Lower lobe of right lung (tissue), 2 donors: ENCODE measurements at regions of chr5 and their contacts with region 1.

Region 1: GRCh38 chr5:142769741-142770631 is at the start of gene ARHGAP26:
- DNase-seq: peak; percentile 98
- ATAC-seq: peak; percentile 98 to 99
- H3K4me3 ChIP-seq: peak within 1 kb of the TSS; percentile 89
- H3K27ac ChIP-seq: peak within 1 kb of the TSS; percentile 85
- H3K4me1 ChIP-seq: peaks cover 33% of the 10 kb centered on the region
- H3K27me3 ChIP-seq: no peaks in the 10 kb centered on the region
- CTCF ChIP-seq: peak; percentile 37
- total RNA-seq, gene ARHGAP26: 42.1 TPM

Region 2: DNA sequence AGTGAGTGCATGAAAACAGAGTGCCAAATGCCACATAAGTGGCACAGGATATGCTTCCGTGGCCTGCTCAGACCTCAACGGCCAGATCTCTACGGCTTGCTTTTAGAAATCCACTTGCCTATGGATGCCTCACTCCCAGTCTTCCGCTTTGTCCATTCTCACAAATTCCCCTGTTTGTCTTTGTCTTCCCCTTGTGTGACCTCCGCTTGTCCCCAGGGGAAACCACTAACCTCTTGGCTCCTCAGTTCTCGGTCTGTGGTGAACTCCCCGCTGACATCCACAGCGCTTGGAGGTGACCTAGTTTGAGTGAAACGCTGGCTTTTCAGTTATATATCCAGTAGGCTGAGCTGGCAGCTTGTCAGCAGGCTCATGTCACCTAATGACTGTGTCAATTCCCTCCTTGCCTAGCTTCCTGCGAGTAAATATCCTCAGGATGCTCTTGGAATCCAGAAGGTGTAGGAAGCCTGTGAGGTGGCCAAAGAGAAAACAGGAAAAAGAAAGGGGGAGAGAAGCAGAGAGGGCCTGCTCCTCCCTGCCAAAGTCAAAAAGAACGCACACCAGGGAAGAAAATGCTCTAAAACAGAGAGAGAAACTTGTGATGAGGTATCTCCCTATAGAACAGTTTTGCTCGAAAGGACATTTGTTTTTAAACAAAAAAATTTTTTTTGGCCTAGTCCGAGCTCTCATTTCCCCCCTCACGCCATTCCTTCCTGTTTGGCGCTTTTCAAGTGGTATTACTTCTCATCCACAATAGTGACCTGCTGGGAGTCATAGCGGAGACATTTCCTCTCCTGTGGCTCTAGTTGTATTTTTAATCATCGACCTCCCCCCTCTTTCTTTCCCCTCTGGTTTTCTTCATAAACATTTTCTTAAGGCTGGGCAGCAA is 343.6 kb before region 1 on chr5:
- intact Hi-C with region 1: no loop called
- DNase-seq: no peak
- ATAC-seq: peak in 1 of 2 donors; percentile 61
- H3K4me3 ChIP-seq: no peak overlapping the region
- H3K27ac ChIP-seq: peak overlapping the region; percentile 21
- H3K4me1 ChIP-seq: peaks cover 23% of the 10 kb centered on the region
- H3K27me3 ChIP-seq: no peaks in the 10 kb centered on the region
- CTCF ChIP-seq: no peak

Region 3: DNA sequence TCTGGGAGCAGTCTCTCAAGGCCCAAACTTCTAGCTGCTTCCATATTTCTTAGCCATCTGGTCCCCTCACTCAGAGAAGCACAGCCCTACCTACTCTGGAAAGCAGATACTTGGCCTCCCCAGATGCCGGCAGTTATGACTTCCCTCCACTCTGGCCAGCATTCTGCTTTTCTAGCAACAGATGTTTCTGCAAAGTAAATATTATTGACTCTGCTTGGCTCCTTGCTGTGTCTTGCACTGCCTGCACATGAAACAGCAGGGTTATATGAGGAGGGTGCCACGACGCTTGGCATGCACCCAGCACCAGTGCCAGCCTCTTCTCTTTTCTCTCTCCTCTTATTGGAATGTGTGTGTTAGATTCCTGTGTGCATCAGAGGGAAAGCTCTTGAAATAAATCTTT is 99.9 kb after region 1 on chr5:
- intact Hi-C with region 1: loop called (anchors 10 kb)
- DNase-seq: no peak
- ATAC-seq: no peak
- H3K4me3 ChIP-seq: no peak overlapping the region
- H3K27ac ChIP-seq: no peak overlapping the region
- H3K4me1 ChIP-seq: peaks cover 60% of the 10 kb centered on the region
- H3K27me3 ChIP-seq: no peaks in the 10 kb centered on the region
- CTCF ChIP-seq: no peak